ENCODE measurements at regions of chr3 and their contacts with region 1.

Region 1: DNA sequence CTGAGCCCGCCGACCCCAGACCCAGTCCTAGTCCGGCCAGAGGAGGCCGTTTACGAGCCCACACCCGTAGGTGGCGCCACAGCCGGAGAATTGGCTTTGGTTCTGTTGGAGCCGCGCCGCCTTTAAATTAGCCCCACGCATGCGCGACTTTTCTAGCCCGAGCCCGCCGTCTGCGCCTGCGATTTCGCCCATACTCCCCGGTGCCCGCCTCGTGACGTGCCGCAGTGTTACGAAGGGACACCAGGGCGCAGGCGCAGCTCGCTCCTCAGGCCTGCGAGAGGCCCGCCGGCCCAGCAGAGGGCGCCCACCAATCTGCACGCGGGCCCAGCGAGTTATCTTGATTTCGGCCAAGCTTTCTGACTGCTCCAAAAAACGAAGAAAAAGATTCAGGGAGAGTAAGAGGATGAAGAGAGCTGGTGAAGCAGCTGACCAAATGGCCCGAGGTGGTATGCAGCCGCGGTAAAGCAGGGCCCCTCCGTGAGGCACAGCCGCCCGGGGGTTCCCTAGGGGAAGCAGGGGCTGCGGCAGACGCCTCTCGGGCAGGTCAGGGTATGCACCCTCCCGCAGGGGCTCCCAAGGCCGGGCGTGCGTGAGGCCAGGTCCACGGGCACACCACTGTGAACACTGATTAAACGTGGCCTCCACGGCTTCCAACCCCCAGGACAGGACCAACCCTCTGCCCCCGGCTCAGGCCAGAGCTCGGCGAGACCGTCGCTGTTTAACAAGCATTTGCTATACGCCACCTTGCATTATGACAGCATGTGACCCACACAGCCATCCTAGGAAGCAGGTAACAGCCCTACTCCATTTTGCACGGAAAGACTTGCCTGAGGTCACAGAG is 32.8 kb downstream of the RPN1 start:
- DNase-seq: peak; percentile 93 to 99 (median 98)

Region 2: GRCh38 chr3:128051837-128052594 is 565.8 kb before region 1 on chr3 and contains the start of gene SEC61A1:
- intact Hi-C with region 1: loop called (anchors 10 kb)
- DNase-seq: peak; percentile 78 to 97 (median 93)

Region 3: GRCh38 chr3:128549283-128550112 is 68.3 kb before region 1 on chr3:
- intact Hi-C with region 1: no loop called
- DNase-seq: peak in 3 of 42 donors; percentile 13 to 62 (median 17)

Region 4: DNA sequence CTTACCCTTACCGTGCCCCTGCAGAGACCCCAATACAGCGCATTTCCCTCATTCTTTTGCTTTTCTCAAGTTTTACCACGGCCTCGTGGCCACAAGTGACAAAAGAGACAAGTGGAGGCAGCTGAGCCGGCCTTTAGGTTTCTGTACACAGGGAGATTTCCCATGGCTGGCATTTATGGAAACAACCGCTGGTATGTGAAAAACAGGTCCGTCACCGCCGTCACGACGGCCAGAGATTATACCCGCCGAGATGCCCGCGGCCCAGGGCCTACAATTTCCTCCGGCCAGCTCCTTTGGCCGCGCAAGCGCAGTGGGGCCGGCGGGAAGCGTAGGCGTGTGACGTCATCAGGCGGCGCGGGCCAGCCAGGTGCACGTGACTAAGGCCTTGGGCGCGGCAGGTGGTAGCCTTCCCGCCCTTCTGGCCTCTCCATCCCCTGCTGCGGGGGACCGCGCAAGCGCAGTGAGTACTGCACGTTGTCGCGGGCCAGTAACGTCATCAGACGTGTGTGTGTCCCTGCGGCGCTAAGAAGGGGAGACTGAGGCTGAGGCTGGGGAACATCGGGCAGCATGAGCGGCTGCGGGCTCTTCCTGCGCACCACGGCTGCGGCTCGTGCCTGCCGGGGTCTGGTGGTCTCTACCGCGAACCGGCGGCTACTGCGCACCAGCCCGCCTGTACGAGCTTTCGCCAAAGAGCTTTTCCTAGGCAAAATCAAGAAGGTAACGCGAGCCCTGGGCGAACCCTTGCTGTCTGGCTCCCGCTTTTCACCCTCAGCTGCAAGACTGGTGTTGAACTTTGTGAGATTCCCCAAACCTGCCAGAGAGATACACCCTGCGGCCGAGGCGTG is 261.6 kb after region 1 on chr3 and contains the start of gene ACAD9:
- intact Hi-C with region 1: loop called (anchors 10 kb)
- DNase-seq: peak; percentile 90 to 99 (median 97)

Measured in head of caudate nucleus (tissue), 42 donors.